ENCODE measurements at regions of chr4 and their contacts with region 1.

Region 1: DNA sequence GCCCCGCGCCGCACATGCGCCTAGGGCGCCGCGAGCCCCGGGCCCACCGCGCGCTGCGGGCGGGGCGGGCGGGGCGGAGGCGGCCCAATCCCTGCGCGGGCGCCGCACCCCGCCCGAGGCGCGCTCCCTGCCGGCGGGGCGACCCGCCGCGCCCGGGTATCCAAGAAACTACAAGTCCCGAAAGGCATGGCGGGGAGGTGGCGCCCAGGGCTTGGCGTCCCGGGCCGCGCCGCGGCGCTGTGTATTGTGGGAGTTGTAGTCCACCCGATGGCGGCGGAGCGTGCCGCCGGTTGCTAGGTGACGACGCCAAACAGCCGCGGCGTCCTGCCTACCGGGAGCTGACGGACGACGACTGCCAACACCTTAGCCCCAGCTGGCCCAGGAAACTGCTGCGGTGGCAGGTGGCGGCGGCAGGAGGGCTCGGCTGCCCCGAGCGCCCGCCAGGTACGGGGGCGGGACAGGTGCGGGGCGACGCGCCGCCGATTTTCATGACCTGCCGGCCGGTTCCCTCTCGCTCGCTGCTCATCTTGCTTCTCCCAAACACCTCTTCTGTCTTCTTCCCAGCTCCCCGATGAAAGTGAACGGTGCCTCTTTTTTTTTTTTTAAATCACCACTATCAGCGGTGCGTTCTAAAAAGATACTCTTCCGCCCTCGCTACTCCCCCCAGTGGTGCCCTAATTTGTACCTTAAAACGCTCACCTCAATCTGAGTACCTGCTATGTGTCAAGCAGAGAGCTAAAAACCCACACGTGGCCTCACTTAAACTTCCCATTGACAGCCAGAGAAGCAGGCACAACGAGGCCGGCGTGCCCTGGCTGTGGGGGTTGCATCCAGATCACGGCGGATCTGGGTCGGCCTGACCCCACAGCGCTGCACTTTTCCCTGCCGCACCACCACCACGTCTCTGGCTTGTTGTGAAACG is at the start of gene CFAP99:
- DNase-seq: peak; percentile 94 to 99 (median 98)

Region 2: DNA sequence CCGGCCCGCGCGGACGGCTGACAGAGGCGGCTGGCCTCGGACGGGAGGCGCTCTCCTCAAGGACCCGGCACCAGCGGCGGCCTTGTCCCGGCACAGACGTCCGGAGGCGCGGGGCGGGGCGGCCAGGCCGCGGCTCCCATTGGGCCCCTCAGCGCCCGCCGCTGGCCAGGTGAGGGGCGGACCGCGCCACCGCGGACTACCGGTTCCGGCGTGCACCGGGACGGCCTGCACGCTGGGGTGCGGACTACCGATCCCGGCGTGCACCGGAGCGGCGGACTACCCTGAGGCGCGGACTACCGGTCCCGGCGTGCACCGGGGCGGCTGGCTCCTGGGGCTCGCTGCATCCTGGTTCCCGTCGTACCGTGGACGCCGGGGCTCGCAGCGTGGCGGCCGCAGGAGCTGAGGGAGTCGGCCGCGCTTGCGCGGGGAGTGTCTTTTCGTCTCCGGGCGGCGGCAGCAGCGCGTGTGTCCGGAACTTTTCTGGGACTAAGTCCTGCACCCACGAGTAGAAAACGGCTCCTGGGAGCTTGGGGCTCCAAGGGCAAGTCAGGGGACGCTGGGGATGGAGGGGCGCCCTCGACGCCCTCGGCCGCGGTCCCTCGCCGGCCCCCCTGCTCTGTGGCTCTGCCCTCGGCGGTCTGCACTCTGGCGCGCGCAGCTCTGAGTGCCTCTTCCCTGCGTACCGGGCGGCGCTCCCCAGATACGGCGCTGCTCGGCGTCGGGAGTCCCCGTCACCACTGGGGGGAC is 562.7 kb before region 1 on chr4 and contains the start of gene LETM1:
- intact Hi-C with region 1: loop called (anchors 2 kb)
- DNase-seq: peak; percentile 93 to 99 (median 96)

Region 3: DNA sequence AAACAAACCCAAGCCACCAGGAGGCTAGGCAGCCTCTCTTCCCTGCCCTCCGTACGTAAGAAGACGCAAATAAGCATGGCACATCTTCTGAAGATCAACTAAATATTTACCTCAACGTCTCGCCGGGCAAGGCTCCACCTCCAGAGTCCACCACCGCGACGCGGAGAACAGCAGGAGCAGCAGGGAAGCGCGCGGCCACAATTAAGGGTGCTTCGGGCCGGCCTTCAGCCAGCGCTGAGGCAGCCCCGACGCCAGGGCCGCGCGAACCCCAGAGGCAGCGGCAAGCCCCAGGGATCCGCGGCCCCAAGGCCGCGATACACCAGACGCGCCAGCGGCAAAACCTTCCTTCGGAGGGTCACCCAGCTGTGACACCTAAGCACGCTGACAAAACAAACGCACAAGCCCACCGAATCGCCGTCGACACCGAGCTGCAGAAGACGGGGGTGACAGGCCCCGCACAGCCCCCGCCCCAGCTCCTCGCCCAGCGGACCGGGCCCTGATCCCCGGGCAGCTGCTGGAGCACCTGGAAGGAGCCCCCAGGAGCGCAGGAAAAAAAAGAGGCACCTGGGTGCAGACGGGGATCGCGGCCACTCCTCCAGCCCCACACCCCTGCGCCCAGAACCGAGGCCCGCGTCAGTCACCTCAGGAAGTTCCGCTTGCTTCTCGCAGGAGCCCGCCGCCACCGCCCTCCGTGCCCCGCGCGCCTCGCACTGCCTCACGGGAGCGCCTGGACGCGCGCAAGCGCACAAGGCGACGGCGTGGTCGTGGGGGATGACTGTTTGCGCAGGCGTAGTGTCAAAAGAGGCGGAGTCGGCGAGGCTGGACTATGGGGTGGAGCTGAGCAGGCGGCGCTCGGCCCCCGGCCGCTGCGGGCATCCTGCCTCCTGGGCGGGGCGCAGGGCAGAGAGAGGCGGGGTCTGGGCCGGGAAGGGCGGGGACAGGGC is 177.2 kb before region 1 on chr4 and contains the starts of genes HAUS3 and POLN:
- intact Hi-C with region 1: loop called (anchors 5 kb)
- DNase-seq: peak; percentile 96 to 100 (median 98)

Region 4: DNA sequence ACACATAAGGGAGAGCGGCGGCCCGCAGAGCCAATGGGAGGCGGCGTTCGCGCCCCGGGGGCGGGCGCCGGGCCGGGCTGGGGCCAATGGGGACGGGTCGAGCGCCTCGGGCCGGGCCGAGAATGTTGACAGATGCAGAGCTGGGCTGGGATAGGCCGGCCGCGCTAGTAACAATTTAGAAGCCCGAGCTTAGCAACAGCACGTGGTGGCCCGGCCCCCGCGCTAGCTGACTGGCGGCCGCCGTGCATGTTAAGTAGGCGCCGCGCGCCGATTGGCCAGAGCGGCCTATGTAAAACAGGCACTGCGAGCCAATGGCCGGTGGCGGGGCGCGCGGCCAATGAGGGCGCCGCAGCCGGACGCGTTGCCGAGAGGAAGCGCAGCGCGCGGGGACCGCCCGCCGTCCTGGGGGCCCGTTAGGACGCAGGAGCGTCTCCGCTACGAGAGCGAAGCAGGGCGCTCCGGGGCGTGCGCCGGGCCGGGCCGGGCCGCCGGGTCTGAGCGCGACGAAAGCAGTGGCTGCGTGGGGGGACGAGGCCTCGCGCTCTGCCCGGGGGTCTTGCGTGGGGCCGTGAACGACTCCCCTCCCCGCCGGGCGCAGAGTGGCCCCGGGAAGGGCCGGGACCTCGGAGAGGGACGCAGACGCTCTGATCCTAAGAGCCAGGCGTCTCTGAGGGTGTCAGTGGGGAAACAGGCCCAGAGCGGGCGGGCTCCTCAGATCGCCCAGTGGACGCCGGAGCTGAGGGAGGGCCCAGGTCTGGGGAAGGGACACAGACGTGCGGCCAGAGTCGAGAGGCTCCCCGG is 156.6 kb before region 1 on chr4:
- intact Hi-C with region 1: loop called (anchors 5 kb)
- DNase-seq: peak; percentile 97 to 100 (median 100)

Region 5: GRCh38 chr4:2462218-2462991 is 43.5 kb after region 1 on chr4:
- intact Hi-C with region 1: loop called (anchors 5 kb)
- DNase-seq: peak; percentile 41 to 96 (median 67)